OCI-LY7 (cell line): ENCODE measurements at regions of chr4 and their contacts with region 1.

Region 1: DNA sequence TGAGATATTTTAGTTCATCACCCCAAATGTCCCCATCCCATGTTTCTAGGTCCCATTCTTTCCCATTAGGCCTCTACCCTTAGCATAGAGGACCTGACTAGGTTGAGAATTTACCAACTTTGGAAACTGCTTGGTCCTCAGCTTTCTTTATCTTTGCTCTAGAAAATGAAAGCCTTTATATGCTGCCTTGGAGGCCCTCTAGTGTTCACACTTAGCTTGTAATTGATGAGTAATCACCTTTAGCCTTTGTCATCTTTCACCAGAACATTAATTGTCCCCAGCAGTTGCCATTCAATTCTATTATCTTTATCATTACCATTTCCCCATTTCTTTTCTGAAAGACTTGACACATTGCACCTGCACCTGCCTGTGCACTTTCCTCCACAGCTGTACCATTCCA is 589.2 kb upstream of the NR3C2 start:
- DNase-seq: peak; percentile 73
- H3K4me3 ChIP-seq: no peak overlapping the region
- H3K27ac ChIP-seq: no peak overlapping the region
- H3K4me1 ChIP-seq: peaks cover 6% of the 10 kb centered on the region
- CTCF ChIP-seq: peak; percentile 83

Region 2: DNA sequence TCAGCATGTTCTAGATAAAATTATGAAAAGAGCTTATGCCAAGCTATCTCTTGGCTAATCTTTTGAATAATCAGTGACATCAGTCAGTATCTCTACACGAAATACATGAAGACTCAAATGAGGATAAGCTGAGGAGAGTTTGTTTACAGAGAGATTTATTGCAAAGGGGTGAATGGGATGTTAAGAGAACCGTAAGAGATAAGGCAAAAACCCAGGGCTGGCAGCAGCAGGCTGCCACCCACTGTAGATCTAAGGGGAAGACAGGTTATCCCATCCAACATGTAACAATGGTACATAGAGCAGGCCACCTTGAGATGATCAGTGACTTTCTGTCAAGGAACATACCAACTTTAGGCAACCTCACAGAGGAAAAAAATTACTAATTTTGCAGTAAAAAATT is 157.1 kb before region 1 on chr4:
- CTCF ChIA-PET with region 1: no interaction called
- POLR2A ChIA-PET with region 1: no interaction called
- intact Hi-C with region 1: loop called (anchors 5 kb)
- DNase-seq: peak; percentile 7
- H3K4me3 ChIP-seq: no peak overlapping the region
- H3K27ac ChIP-seq: no peak overlapping the region
- H3K4me1 ChIP-seq: no peaks in the 10 kb centered on the region
- CTCF ChIP-seq: no peak